Heart right ventricle (tissue), 16 donors: ENCODE measurements at regions of chr4 and their contacts with region 1.

Region 1: DNA sequence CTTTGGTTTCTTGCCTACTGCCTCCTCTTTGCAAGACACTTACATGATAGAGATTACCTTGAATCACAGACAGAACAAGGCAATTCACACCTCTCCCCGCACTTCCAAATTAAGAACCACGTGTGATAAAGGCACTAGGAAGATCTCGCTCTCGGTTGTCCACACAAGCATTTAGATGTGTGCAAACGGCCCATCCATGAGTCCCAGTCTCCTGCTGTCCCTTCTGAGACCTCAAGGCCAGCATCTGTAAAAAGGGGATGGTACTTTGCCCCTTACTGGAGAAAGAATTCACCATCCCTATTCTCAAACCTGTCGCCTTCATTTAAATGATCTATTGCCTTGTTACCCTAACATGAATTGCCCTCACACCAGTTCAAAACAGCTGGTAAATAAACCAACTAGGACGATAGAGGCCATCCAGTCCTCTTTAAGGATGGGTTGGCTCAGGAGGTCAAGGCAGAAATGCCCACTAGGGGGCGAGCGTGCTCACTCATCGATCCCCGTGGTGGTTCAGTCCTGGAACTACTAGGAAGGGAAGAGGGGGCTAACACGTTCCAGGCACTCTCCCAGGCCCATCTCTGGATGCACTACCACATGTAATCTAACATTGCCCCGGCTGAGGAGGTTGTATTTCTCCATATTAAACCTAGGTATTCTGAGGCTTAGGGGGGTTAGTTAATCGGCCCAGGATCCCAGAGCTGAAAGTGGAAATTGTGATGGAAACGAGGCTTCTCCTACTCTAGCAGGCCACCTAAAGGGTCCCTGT is 95.8 kb downstream of the DHX15 start:
- DNase-seq: peak; percentile 65 to 80
- ATAC-seq: peak; percentile 67 to 87 (median 80)
- H3K4me3 ChIP-seq: no peak overlapping the region
- H3K27ac ChIP-seq: no peak overlapping the region
- H3K4me1 ChIP-seq: peaks cover 0 to 11% (median 0%) of the 10 kb centered on the region in 9 donors
- H3K27me3 ChIP-seq: no peaks in the 10 kb centered on the region
- CTCF ChIP-seq: peak; percentile 76 to 87 (median 81)

Region 2: GRCh38 chr4:24794916-24795665 is 306.5 kb after region 1 on chr4 and contains the start of gene SOD3:
- intact Hi-C with region 1: loop called in 3 of 10 experiments (anchors 10 kb)
- DNase-seq: peak; percentile 80 to 88
- ATAC-seq: peak; percentile 93 to 98 (median 96)
- H3K4me3 ChIP-seq: peak within 1 kb of the TSS in 9 of 10 donors; percentile 22 to 54 (median 48)
- H3K27ac ChIP-seq: peak within 1 kb of the TSS; percentile 39 to 90 (median 85)
- H3K4me1 ChIP-seq: peaks cover 2 to 36% (median 17%) of the 10 kb centered on the region in 9 donors
- H3K27me3 ChIP-seq: peaks cover 0 to 18% (median 9%) of the 10 kb centered on the region in 7 donors
- CTCF ChIP-seq: no peak
- total RNA-seq, gene SOD3: 30.3 to 118 (median 56.2) TPM

Region 3: GRCh38 chr4:24912252-24913118 is 423.9 kb after region 1 on chr4 and contains the start of gene CCDC149:
- intact Hi-C with region 1: loop called in 1 of 10 experiments (anchors 10 kb)
- DNase-seq: peak; percentile 70 to 76
- ATAC-seq: peak; percentile 84 to 93 (median 90)
- H3K4me3 ChIP-seq: peak within 1 kb of the TSS; percentile 37 to 74 (median 67)
- H3K27ac ChIP-seq: peak within 1 kb of the TSS; percentile 87 to 97 (median 92)
- H3K4me1 ChIP-seq: peaks cover 2 to 21% (median 7%) of the 10 kb centered on the region in 9 donors
- H3K27me3 ChIP-seq: no peaks in the 10 kb centered on the region
- CTCF ChIP-seq: peak in 5 of 9 donors; percentile 7 to 38 (median 19)
- total RNA-seq, gene CCDC149: 8.0 to 17.7 (median 9.3) TPM

Region 4: DNA sequence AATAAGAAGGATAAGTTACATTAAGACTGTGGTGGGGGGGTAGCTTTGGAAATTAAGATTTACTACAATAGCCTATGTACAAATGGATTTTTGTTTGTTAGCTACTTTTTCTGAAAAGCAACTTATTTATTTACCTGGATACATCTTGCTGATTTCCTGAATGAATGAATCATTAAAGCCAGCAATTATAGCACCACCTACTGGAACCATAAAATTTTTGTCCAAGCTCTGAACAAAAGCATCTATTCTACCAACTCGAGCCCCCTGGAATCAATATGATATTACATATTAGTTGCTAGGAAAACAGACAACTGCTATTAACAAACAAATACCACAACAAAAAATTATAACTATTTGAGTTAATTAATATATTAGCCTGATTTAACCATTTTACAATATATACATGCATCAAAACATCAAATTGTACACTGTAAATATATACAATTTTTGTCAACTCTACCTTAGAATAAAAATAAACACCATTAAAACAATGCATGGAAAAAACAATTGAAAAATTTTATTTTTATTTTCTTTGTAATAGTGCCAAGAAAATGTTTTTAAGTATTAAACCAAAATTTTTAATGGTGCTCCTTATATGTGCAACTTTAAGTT is 656.4 kb after region 1 on chr4:
- intact Hi-C with region 1: loop called in 3 of 10 experiments (anchors 5 to 10 kb)
- DNase-seq: no peak
- ATAC-seq: peak in 1 of 8 donors; percentile 38
- H3K4me3 ChIP-seq: no peak overlapping the region
- H3K27ac ChIP-seq: no peak overlapping the region
- H3K4me1 ChIP-seq: peaks cover 0 to 11% (median 0%) of the 10 kb centered on the region in 9 donors
- H3K27me3 ChIP-seq: no peaks in the 10 kb centered on the region
- CTCF ChIP-seq: peak; percentile 36 to 76 (median 63)